ENCODE measurements at regions of chr6 and their contacts with region 1.

Region 1: GRCh38 chr6:25017932-25018567 is 82.3 kb upstream of the RIPOR2 start:
- DNase-seq: peak; percentile 91
- ATAC-seq: peak; percentile 78
- H3K4me3 Mint-ChIP-seq: peak overlapping the region; percentile 1
- H3K27ac Mint-ChIP-seq: peak overlapping the region; percentile 74
- H3K4me1 Mint-ChIP-seq: peaks cover 55% of the 10 kb centered on the region
- H3K27me3 Mint-ChIP-seq: no peaks in the 10 kb centered on the region

Region 2: GRCh38 chr6:24699521-24700359 is 318.3 kb before region 1 on chr6:
- CTCF ChIA-PET with region 1: interaction called, 4 read pairs
- POLR2A ChIA-PET with region 1: no interaction called
- intact Hi-C with region 1: loop called in 1 of 2 experiments (anchors 5 kb)
- DNase-seq: no peak
- ATAC-seq: peak; percentile 89
- H3K4me3 Mint-ChIP-seq: no peak overlapping the region
- H3K27ac Mint-ChIP-seq: peak overlapping the region; percentile 89
- H3K4me1 Mint-ChIP-seq: peaks cover 68% of the 10 kb centered on the region
- H3K27me3 Mint-ChIP-seq: no peaks in the 10 kb centered on the region

Region 3: GRCh38 chr6:24788048-24788665 is 229.9 kb before region 1 on chr6:
- CTCF ChIA-PET with region 1: interaction called, 8 read pairs
- POLR2A ChIA-PET with region 1: interaction called, 5 read pairs
- intact Hi-C with region 1: loop called in 1 of 2 experiments (anchors 5 kb)
- DNase-seq: peak; percentile 37
- ATAC-seq: peak; percentile 86
- H3K4me3 Mint-ChIP-seq: no peak overlapping the region
- H3K27ac Mint-ChIP-seq: peak overlapping the region; percentile 8
- H3K4me1 Mint-ChIP-seq: peaks cover 25% of the 10 kb centered on the region
- H3K27me3 Mint-ChIP-seq: no peaks in the 10 kb centered on the region

Region 4: GRCh38 chr6:24891004-24891403 is 127.0 kb before region 1 on chr6:
- CTCF ChIA-PET with region 1: interaction called, 10 read pairs
- POLR2A ChIA-PET with region 1: no interaction called
- intact Hi-C with region 1: no loop called
- DNase-seq: peak; percentile 39
- ATAC-seq: peak; percentile 67
- H3K4me3 Mint-ChIP-seq: no peak overlapping the region
- H3K27ac Mint-ChIP-seq: peak overlapping the region; percentile 93
- H3K4me1 Mint-ChIP-seq: peaks cover 87% of the 10 kb centered on the region
- H3K27me3 Mint-ChIP-seq: no peaks in the 10 kb centered on the region

Region 5: GRCh38 chr6:24966381-24966780 is 51.7 kb before region 1 on chr6:
- CTCF ChIA-PET with region 1: interaction called, 11 read pairs
- POLR2A ChIA-PET with region 1: interaction called, 3 read pairs
- intact Hi-C with region 1: no loop called
- DNase-seq: no peak
- ATAC-seq: no peak
- H3K4me3 Mint-ChIP-seq: no peak overlapping the region
- H3K27ac Mint-ChIP-seq: no peak overlapping the region
- H3K4me1 Mint-ChIP-seq: peaks cover 71% of the 10 kb centered on the region
- H3K27me3 Mint-ChIP-seq: no peaks in the 10 kb centered on the region

Region 6: GRCh38 chr6:25070547-25071366 is 52.7 kb after region 1 on chr6:
- CTCF ChIA-PET with region 1: interaction called, 41 read pairs
- POLR2A ChIA-PET with region 1: no interaction called
- intact Hi-C with region 1: loop called in 1 of 2 experiments (anchors 1 kb)
- DNase-seq: peak; percentile 88
- ATAC-seq: peak; percentile 94
- H3K4me3 Mint-ChIP-seq: no peak overlapping the region
- H3K27ac Mint-ChIP-seq: peak overlapping the region; percentile 47
- H3K4me1 Mint-ChIP-seq: peaks cover 4% of the 10 kb centered on the region
- H3K27me3 Mint-ChIP-seq: no peaks in the 10 kb centered on the region

Region 7: GRCh38 chr6:25122001-25122400 is 104.0 kb after region 1 on chr6:
- CTCF ChIA-PET with region 1: no interaction called
- POLR2A ChIA-PET with region 1: no interaction called
- intact Hi-C with region 1: no loop called
- DNase-seq: no peak
- ATAC-seq: no peak
- H3K4me3 Mint-ChIP-seq: no peak overlapping the region
- H3K27ac Mint-ChIP-seq: no peak overlapping the region
- H3K4me1 Mint-ChIP-seq: peaks cover 31% of the 10 kb centered on the region
- H3K27me3 Mint-ChIP-seq: no peaks in the 10 kb centered on the region

Region 8: GRCh38 chr6:25330796-25331685 is 313.0 kb after region 1 on chr6:
- CTCF ChIA-PET with region 1: no interaction called
- POLR2A ChIA-PET with region 1: no interaction called
- intact Hi-C with region 1: no loop called
- DNase-seq: no peak
- ATAC-seq: no peak
- H3K4me3 Mint-ChIP-seq: no peak overlapping the region
- H3K27ac Mint-ChIP-seq: no peak overlapping the region
- H3K4me1 Mint-ChIP-seq: peaks cover 10% of the 10 kb centered on the region
- H3K27me3 Mint-ChIP-seq: no peaks in the 10 kb centered on the region